ENCODE measurements at regions of chr22 and their contacts with region 1.

Region 1: DNA sequence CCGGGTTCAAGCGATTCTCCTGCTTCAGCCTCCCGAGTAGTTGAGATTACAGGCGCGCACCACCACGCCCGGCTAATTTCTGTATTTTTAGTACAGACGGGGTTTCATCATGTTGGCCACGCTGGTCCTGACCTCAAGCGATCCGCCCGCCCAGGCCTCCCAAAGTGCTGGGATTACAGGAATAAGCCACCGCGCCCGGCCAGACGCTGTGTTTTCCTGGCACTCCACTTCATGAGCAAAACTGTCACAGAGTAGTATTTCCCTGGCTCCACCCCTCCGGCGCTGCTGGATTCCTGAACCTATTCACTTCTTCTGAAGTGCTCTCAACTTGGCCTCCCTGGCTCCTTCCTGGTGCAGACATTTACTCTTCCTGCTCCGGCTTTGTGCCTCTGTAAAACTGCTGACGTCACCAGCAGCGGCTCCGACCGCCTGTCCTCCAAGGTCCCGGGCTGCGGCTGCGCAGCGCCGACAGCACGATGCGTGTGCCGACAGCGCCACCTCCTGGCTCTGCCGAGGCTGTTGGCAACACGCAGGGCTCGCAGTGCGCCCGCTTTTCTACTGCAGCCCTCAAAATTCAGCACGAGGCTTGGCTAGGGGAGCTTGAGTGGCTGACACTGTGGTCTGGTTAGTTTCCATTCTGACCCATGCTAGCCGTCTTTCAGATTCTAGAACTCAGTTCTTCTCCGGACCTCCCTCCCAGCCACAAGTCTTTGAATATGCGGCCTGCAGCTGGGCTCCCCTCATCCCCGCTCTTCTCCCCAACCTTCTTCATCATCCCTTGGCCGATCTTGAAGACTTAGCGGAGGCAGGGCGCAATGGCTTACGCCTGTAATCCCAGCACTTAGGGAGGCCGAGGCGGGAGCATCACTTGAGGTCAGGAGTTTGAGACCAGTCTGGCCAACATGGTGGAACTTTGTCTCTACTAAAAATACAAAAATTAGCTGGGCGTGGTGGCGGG is 36.6 kb downstream of the APOL3 start:
- DNase-seq: peak; percentile 94 to 98 (median 97)
- ATAC-seq: peak; percentile 96 to 99 (median 98)
- H3K4me3 ChIP-seq: peak overlapping the region in 10 of 12 donors; percentile 15 to 51 (median 37)
- H3K27ac ChIP-seq: peak overlapping the region; percentile 53 to 94 (median 86)
- H3K4me1 ChIP-seq: peaks cover 0 to 10% (median 2%) of the 10 kb centered on the region in 12 donors
- H3K27me3 ChIP-seq: no peaks in the 10 kb centered on the region
- CTCF ChIP-seq: peak; percentile 95 to 99 (median 98)
- POLR2A ChIP-seq: peak in 1 of 2 donors; percentile 51

Region 2: DNA sequence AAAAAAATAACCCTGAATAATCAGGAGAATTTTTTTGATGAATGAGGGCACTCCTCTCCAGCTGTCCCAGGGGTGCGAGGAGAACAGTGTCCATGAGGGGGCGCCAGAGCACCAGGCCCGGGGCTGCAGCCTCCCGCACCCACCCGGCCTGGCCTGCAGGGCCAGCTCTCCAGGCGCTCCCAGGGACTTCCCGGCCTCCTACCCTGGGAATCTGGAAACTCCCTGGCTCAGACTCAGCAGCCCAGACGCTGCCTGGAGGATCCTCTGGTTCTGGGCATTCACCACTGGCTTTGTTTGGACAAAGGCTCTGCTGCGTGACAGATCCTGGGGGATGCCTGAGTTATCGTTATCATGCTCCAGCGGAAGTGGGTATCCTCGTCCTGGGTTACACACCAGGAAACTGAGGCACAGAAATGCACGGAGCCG is 693.0 kb before region 1 on chr22:
- intact Hi-C with region 1: loop called in 6 of 10 experiments (anchors 5 to 10 kb)
- DNase-seq: peak; percentile 87 to 93 (median 91)
- ATAC-seq: peak; percentile 95 to 98 (median 98)
- H3K4me3 ChIP-seq: no peak overlapping the region
- H3K27ac ChIP-seq: peak overlapping the region in 6 of 12 donors; percentile 5 to 67 (median 48)
- H3K4me1 ChIP-seq: peaks cover 0 to 13% (median 7%) of the 10 kb centered on the region in 12 donors
- H3K27me3 ChIP-seq: no peaks in the 10 kb centered on the region
- CTCF ChIP-seq: peak; percentile 94 to 98 (median 96)
- POLR2A ChIP-seq: no peak

Region 3: DNA sequence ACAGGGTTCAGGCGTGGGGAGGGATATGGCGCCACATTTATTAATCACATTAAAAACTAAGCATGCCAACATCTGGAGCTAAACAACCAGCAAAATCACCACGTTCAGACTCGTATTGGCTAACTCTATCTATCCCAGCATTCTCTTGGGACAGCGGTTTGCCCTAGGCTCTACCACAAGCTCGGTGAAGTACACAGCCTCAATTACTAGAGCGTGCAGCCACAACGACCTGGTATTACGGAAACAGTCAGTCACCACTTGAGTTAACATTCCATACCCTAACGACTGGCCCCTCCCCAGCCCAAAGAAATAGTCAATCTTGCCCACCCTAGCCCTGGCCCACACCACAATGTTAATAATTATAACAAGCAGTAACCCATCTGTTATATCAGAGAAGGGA is 374.1 kb before region 1 on chr22:
- intact Hi-C with region 1: loop called in 2 of 10 experiments (anchors 10 kb)
- DNase-seq: no peak
- ATAC-seq: peak in 2 of 4 donors; percentile 20 to 30
- H3K4me3 ChIP-seq: no peak overlapping the region
- H3K27ac ChIP-seq: no peak overlapping the region
- H3K4me1 ChIP-seq: peaks cover 0 to 48% (median 28%) of the 10 kb centered on the region in 12 donors
- H3K27me3 ChIP-seq: no peaks in the 10 kb centered on the region
- CTCF ChIP-seq: no peak
- POLR2A ChIP-seq: no peak

Region 4: DNA sequence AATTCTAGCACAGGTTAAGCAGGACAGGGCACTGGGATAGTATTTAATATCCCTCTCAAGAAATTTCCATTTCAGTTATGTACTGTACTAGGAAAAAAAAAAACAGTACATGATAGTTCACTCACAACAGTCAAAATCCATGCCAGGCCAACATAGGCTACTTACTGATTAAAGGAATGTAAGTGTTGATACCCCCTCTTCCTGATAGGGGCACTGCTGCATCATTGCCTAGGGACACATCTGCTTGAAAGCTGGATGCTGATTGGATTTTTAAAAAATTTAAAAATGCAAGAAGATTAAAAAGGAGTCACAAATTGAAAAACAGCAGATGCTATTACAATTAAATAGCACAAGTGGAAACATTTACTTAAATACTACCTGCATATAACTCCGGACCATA is 362.9 kb before region 1 on chr22:
- intact Hi-C with region 1: loop called in 3 of 10 experiments (anchors 10 kb)
- DNase-seq: no peak
- ATAC-seq: peak in 2 of 4 donors; percentile 57
- H3K4me3 ChIP-seq: no peak overlapping the region
- H3K27ac ChIP-seq: no peak overlapping the region
- H3K4me1 ChIP-seq: peaks cover 0 to 16% (median 1%) of the 10 kb centered on the region in 12 donors
- H3K27me3 ChIP-seq: no peaks in the 10 kb centered on the region
- CTCF ChIP-seq: peak in 11 of 12 donors; percentile 12 to 51 (median 30)
- POLR2A ChIP-seq: no peak

Region 5: DNA sequence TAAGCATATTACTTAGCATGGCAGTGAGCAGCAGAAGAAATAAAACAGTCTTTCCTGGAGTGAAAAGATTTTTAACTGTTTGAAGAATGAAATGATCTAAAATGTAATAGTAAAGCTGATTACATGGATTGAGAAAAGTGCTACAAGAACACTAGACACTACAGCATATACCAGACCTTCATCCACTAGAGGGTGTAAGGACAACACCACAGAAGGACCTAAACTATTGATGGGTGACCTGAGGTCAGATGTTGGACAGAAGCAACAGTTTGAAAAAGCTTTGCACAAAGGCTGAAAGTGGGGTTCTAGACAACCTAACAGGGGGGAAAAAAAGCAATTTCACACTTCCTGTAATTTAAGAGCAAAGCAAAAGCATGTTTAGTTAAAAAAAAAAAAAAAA is 193.0 kb before region 1 on chr22:
- intact Hi-C with region 1: loop called (anchors 1 to 5 kb)
- DNase-seq: peak in 1 of 5 donors; percentile 57
- ATAC-seq: peak; percentile 86 to 96 (median 94)
- H3K4me3 ChIP-seq: no peak overlapping the region
- H3K27ac ChIP-seq: peak overlapping the region in 1 of 12 donors; percentile 15
- H3K4me1 ChIP-seq: peaks cover 0 to 12% (median 3%) of the 10 kb centered on the region in 12 donors
- H3K27me3 ChIP-seq: no peaks in the 10 kb centered on the region
- CTCF ChIP-seq: peak; percentile 38 to 85 (median 72)
- POLR2A ChIP-seq: no peak

Region 6: DNA sequence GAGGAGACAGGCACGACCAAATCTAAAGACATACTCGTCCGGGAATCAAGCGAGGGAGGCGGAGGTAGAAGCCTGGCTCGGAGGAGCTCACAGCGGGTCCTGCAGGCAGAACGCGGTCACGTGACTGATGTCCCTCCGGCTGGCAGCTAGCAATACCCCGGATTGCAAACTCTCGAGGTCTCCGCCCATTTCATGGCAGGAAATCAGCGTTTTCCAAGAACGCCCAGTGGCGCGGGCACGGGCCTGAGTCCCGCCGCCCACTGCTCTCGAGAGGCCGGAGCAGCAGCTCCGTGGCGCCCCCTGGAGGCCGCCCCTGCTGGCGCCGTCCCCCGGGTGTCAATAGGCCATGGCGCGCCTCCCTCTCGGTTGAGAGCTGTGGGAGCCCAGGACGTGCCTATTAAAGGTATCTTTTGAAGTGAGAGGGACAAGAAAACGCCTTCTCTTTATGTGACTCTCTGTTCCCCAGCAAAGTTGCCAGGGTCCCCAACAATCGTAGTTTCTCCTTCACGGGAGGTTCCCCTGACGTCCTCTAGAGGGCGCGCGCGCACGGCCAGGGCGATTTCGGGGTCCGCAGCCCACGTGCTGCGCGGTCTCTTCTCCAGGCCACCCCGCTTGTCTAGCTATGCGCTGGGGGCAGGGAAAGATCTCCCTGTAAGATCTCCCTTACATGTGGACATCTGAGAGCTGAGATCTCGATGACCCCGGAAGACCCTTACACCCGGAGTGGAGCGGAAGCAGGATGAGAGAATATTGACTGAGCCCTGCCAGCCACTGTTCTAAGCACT is 58.0 kb before region 1 on chr22:
- intact Hi-C with region 1: loop called (anchors 1 to 10 kb)
- DNase-seq: peak; percentile 88 to 94 (median 92)
- ATAC-seq: peak; percentile 92 to 94 (median 93)
- H3K4me3 ChIP-seq: peak overlapping the region; percentile 15 to 69 (median 58)
- H3K27ac ChIP-seq: peak overlapping the region; percentile 72 to 91 (median 82)
- H3K4me1 ChIP-seq: peaks cover 0 to 18% (median 6%) of the 10 kb centered on the region in 12 donors
- H3K27me3 ChIP-seq: no peaks in the 10 kb centered on the region
- CTCF ChIP-seq: peak; percentile 100
- POLR2A ChIP-seq: peak in 1 of 2 donors; percentile 32